ENCODE measurements at regions of chr15 and their contacts with region 1.

Region 1: GRCh38 chr15:52208306-52208946 is 17.2 kb upstream of the GNB5 start:
- DNase-seq: peak; percentile 73
- H3K4me3 ChIP-seq: no peak overlapping the region
- H3K27ac ChIP-seq: no peak overlapping the region
- H3K4me1 ChIP-seq: peaks cover 17% of the 10 kb centered on the region
- H3K27me3 ChIP-seq: no peaks in the 10 kb centered on the region
- CTCF ChIP-seq: peak; percentile 71 to 86
- POLR2A ChIP-seq: no peak

Region 2: DNA sequence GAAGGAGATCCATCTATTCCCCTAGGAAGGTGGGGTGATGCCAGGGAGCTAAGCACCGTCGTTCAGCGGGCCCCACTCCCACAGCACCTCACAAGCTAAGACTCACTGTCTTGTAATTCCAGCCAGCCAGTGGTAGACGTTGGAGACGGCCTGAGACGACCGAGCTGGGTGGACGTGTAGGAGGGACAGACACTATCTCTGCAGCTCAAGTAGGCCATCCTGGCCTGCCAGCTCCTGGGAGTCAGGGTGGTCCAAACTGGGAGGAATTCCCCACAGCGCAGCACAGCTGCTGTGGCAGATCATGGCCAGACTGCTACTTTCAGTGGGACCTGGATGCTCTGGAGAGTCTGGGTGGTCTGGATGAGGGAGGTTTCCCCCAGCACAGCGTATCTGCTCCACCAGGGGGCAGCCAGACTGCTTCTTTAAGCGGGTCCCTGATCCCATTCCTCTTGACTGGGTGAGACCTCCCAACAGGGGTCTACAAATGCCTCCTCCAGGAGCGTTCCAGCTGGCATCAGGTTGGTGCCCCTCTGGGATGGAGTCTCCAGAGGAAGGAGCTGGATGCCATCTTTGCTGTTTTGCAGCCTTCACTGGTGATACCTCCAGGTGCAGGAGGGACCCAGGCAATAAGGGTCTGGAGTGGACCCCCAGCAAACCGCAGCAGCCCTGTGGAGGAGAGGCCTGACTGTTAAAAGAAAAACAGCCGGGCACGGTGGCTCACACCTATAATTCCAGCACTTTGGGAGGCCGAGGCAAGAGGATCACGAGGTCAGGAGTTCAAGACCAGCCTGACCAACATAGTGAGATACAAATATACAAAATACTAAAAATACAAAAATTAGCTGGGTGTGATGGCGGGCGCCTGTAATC is 44.9 kb before region 1 on chr15:
- CTCF ChIA-PET with region 1: interaction called, 4 read pairs
- POLR2A ChIA-PET with region 1: no interaction called
- dilution Hi-C with region 1: no loop called
- intact Hi-C with region 1: loop called (anchors 1 kb)
- DNase-seq: no peak
- H3K4me3 ChIP-seq: no peak overlapping the region
- H3K27ac ChIP-seq: no peak overlapping the region
- H3K4me1 ChIP-seq: no peaks in the 10 kb centered on the region
- H3K27me3 ChIP-seq: no peaks in the 10 kb centered on the region
- CTCF ChIP-seq: peak; percentile 19 to 38
- POLR2A ChIP-seq: no peak